Activated T-helper 2 cell treated with anti-CD3 and anti-CD28 coated beads, Interferon-gamma antibody, Interleukin-2, Interleukin-4, amounts not matched to agents 10 μg/mL and 5 μg/mL and 100 μg/mL, durations not matched to agents 14 hours and 24 hours and 36 hours (primary cell): ENCODE measurements at regions of chr22 and their contacts with region 1.

Region 1: GRCh38 chr22:30245985-30246901 is at the start of gene LIF:
- DNase-seq: peak; percentile 65
- H3K4me3 Mint-ChIP-seq: peak within 1 kb of the TSS; percentile 99
- H3K27ac Mint-ChIP-seq: peak within 1 kb of the TSS; percentile 99
- H3K4me1 Mint-ChIP-seq: peaks cover 66% of the 10 kb centered on the region
- H3K27me3 Mint-ChIP-seq: no peaks in the 10 kb centered on the region
- total RNA-seq, gene LIF: 919 and 932 TPM in 2 replicates

Region 2: DNA sequence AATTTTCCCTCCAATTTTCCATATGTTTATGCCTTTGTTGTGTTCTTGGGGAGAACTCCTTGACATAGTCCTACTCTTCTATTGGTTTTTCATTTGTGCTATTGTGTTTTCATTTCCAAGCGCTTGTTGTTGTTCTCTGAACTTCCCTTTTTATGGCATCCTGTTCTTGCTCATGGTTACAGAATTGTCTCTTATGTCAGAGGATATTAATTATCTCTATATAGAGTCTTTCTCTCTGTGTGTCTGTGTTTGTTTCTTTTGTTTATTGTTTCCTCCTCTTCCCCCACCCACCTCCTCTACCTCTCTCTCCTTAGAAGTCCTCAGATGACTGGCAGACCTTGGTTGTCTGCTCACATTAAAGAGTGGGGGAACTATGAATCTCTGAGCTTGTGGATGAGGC is 96.0 kb before region 1 on chr22:
- intact Hi-C with region 1: no loop called
- DNase-seq: no peak
- H3K4me3 Mint-ChIP-seq: no peak overlapping the region
- H3K27ac Mint-ChIP-seq: no peak overlapping the region
- H3K4me1 Mint-ChIP-seq: peaks cover 12% of the 10 kb centered on the region
- H3K27me3 Mint-ChIP-seq: no peaks in the 10 kb centered on the region

Region 3: GRCh38 chr22:30178181-30179126 is 67.8 kb before region 1 on chr22:
- intact Hi-C with region 1: loop called (anchors 2 kb)
- DNase-seq: no peak
- H3K4me3 Mint-ChIP-seq: no peak overlapping the region
- H3K27ac Mint-ChIP-seq: peak overlapping the region; percentile 98
- H3K4me1 Mint-ChIP-seq: peaks cover 76% of the 10 kb centered on the region
- H3K27me3 Mint-ChIP-seq: no peaks in the 10 kb centered on the region

Region 4: DNA sequence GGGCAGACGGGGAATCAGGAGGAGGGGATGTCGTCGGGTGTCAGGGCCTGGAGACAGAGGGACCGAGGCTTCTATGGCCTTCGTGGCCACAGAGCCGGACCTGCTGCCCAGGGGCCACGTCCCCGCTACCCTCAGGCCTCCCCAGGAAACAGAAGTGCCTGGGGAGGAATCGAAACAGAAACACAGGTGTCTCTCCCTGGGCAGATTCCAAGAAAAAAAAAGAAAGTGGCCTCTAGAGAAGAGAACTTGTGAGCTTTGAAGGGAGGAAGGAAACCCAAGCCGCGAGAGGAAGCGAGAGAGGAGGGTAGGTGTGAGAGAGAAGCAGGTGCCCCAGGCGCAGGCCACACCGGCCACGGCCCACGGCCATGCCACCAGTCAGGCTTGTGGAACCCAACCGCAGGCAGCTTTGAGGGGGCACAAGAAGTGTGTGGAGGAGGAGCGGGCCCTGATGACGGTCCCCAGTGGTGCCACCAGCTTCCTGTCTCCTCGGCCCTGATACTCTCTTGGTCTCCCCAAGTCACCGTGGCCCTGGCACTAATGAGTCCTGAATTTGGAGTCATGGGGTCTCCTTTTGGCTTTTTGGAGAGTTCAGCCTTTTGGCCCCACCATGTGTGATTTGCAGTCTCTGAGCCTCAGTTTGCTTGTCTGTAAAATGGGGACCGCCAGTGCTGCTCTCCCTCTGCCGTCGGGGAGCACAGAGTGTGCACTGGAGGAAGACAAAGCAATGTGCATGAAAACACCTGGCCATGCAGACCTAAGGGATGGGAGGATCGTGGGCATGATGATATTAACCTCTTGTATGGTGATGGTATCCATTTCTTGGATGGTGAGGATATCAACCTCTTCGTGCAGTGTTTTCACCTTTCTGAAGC is 24.9 kb before region 1 on chr22:
- intact Hi-C with region 1: loop called (anchors 2 kb)
- DNase-seq: peak; percentile 56
- H3K4me3 Mint-ChIP-seq: peak overlapping the region; percentile 18
- H3K27ac Mint-ChIP-seq: peak overlapping the region; percentile 80
- H3K4me1 Mint-ChIP-seq: peaks cover 60% of the 10 kb centered on the region
- H3K27me3 Mint-ChIP-seq: no peaks in the 10 kb centered on the region

Region 5: DNA sequence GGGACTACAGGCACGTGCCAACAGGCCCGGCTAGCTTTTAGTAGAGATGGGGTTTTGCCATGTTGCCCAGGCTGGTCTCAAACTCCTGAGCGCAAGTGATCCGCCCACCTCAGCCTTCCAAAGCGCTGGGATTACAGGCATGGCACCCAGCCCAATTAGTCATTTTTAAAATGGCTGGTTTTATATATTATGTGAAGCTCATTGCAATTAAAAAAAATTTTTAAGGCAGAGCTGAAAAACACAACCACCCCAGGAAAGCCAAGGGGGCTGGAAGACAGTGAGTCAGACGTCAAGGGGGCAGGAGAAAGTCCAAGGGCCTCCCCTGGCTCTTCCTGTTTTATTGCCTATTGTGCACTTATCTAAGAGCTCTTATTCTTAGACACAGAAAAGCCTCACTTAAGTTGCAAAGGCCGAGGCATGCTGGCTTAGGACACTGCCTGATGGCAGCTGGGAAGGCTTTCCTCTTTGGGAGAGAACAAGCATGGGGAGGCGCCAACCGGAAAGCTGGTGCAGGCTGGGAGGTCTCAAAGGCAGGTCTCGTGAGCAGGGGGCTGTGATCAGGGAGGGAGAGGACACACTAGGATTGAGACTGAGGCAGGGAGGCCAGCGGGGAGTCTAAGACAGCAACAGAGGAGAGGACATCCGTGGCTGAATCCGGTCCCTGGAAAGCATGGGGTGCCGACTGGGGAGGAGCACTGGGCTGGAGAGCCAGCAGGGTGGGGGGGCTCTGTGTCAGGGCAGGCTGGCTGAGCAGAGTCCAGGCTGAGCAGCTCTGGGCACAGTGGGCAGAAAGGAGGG is 31.5 kb after region 1 on chr22:
- intact Hi-C with region 1: no loop called
- DNase-seq: no peak
- H3K4me3 Mint-ChIP-seq: no peak overlapping the region
- H3K27ac Mint-ChIP-seq: peak overlapping the region; percentile 12
- H3K4me1 Mint-ChIP-seq: peaks cover 53% of the 10 kb centered on the region
- H3K27me3 Mint-ChIP-seq: no peaks in the 10 kb centered on the region